Activated CD8-positive, alpha-beta T cell treated with anti-CD3 and anti-CD28 coated beads for 36 hours (primary cell): ENCODE measurements at regions of chr11 and their contacts with region 1.

Region 1: GRCh38 chr11:1652771-1653540 is 23.4 kb downstream of the KRTAP5-5 start:
- DNase-seq: peak; percentile 74
- ATAC-seq: peak; percentile 89
- H3K4me3 Mint-ChIP-seq: no peak overlapping the region
- H3K27ac Mint-ChIP-seq: no peak overlapping the region
- H3K4me1 Mint-ChIP-seq: no peaks in the 10 kb centered on the region
- H3K27me3 Mint-ChIP-seq: peaks cover 14% of the 10 kb centered on the region
- CTCF ChIP-seq: peak; percentile 94

Region 2: GRCh38 chr11:1633864-1634263 is 19.1 kb before region 1 on chr11:
- CTCF ChIA-PET with region 1: interaction called, 86 read pairs
- POLR2A ChIA-PET with region 1: no interaction called
- intact Hi-C with region 1: no loop called
- DNase-seq: no peak
- ATAC-seq: no peak
- H3K4me3 Mint-ChIP-seq: no peak overlapping the region
- H3K27ac Mint-ChIP-seq: no peak overlapping the region
- H3K4me1 Mint-ChIP-seq: no peaks in the 10 kb centered on the region
- H3K27me3 Mint-ChIP-seq: peaks cover 10% of the 10 kb centered on the region
- CTCF ChIP-seq: no peak

Region 3: GRCh38 chr11:1674173-1675131 is 21.5 kb after region 1 on chr11:
- CTCF ChIA-PET with region 1: interaction called, 44 read pairs
- POLR2A ChIA-PET with region 1: no interaction called
- intact Hi-C with region 1: no loop called
- DNase-seq: no peak
- ATAC-seq: no peak
- H3K4me3 Mint-ChIP-seq: no peak overlapping the region
- H3K27ac Mint-ChIP-seq: no peak overlapping the region
- H3K4me1 Mint-ChIP-seq: no peaks in the 10 kb centered on the region
- H3K27me3 Mint-ChIP-seq: peaks cover 34% of the 10 kb centered on the region
- CTCF ChIP-seq: no peak

Region 4: GRCh38 chr11:1701091-1701807 is 48.3 kb after region 1 on chr11:
- CTCF ChIA-PET with region 1: interaction called, 27 read pairs
- POLR2A ChIA-PET with region 1: no interaction called
- intact Hi-C with region 1: no loop called
- DNase-seq: peak; percentile 62
- ATAC-seq: peak; percentile 82
- H3K4me3 Mint-ChIP-seq: no peak overlapping the region
- H3K27ac Mint-ChIP-seq: peak overlapping the region; percentile 68
- H3K4me1 Mint-ChIP-seq: peaks cover 18% of the 10 kb centered on the region
- H3K27me3 Mint-ChIP-seq: no peaks in the 10 kb centered on the region
- CTCF ChIP-seq: no peak

Region 5: GRCh38 chr11:1837171-1838076 is 184.5 kb after region 1 on chr11:
- CTCF ChIA-PET with region 1: interaction called, 95 read pairs
- POLR2A ChIA-PET with region 1: interaction called, 3 read pairs
- intact Hi-C with region 1: no loop called
- DNase-seq: peak; percentile 91
- ATAC-seq: peak; percentile 97
- H3K4me3 Mint-ChIP-seq: no peak overlapping the region
- H3K27ac Mint-ChIP-seq: no peak overlapping the region
- H3K4me1 Mint-ChIP-seq: peaks cover 6% of the 10 kb centered on the region
- H3K27me3 Mint-ChIP-seq: no peaks in the 10 kb centered on the region
- CTCF ChIP-seq: peak; percentile 94